ENCODE measurements at regions of chr9 and their contacts with region 1.

Region 1: DNA sequence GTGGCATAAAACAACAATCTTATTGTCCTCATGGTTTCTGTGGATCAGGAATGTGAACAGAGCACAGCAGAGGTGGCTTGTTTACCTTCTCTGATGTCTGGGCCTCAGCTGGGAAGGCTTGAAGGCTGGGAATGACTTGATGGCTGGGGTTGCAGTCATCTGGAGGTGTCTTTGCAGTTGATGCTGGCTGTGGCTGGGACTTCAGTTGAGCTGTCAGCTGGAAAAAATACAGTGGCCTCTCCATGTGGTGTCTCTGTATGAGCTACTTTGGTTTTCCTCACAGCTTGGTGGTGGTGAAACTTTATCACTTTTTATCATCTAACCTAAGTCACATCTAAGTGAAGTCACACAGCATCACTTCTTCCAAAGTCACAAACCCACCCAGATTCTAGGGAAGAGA is 24.7 kb upstream of the STX17 start:
- DNase-seq: no peak
- H3K4me3 Mint-ChIP-seq: no peak overlapping the region
- H3K27ac Mint-ChIP-seq: peak overlapping the region; percentile 20
- H3K4me1 Mint-ChIP-seq: peaks cover 33% of the 10 kb centered on the region
- H3K27me3 Mint-ChIP-seq: no peaks in the 10 kb centered on the region

Region 2: GRCh38 chr9:99294821-99295461 is 586.8 kb before region 1 on chr9:
- intact Hi-C with region 1: no loop called
- DNase-seq: no peak
- H3K4me3 Mint-ChIP-seq: no peak overlapping the region
- H3K27ac Mint-ChIP-seq: no peak overlapping the region
- H3K4me1 Mint-ChIP-seq: peaks cover 1% of the 10 kb centered on the region
- H3K27me3 Mint-ChIP-seq: peaks cover 15% of the 10 kb centered on the region

Region 3: DNA sequence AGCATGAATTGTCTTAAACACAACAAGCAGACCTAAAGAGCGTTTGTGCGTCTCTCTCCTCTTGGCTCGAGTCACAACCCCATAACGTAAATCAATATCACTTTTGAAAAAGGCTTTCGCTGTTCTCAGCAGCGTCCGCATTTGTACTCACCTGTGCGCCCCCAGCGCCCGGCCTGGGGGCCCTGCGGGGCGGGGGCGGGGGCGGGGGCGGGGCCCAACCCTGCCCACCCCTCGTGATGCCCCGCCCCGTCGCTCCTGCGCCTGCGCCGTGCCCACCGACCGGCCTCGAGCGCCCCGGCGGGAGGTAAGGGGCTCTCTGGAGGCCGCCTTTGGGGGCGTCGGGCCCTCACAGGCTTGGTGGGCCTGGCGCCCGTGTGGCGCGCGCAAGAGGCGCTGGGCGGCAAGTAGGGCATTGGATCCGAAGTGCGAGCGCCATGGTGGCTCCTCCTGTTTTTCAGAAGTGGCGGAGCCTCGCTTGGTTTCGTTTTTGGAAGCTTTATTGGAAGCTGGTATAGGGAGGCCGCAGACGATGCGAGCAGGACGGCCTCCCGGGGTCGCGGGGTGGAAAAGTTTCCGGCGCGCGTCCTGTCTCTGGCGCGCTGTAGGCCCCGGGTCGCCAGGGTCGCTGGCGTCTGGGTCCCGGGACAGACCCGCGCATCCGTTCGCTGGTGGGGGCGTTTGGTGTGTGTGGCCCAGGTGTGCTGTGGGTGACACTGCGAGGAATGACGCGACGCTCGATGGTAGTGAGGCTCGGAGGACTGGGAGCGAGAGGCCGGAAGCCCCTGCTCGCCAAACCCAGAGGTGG is 24.8 kb after region 1 on chr9 and contains the start of gene STX17:
- intact Hi-C with region 1: loop called (anchors 2 kb)
- DNase-seq: peak; percentile 76
- H3K4me3 Mint-ChIP-seq: peak within 1 kb of the TSS; percentile 94
- H3K27ac Mint-ChIP-seq: peak within 1 kb of the TSS; percentile 90
- H3K4me1 Mint-ChIP-seq: peaks cover 28% of the 10 kb centered on the region
- H3K27me3 Mint-ChIP-seq: peaks cover 17% of the 10 kb centered on the region
- total RNA-seq, gene STX17: 27.6 and 27.9 TPM in 2 replicates